Left lung (tissue), 14 donors: ENCODE measurements at regions of chr2 and their contacts with region 1.

Region 1: DNA sequence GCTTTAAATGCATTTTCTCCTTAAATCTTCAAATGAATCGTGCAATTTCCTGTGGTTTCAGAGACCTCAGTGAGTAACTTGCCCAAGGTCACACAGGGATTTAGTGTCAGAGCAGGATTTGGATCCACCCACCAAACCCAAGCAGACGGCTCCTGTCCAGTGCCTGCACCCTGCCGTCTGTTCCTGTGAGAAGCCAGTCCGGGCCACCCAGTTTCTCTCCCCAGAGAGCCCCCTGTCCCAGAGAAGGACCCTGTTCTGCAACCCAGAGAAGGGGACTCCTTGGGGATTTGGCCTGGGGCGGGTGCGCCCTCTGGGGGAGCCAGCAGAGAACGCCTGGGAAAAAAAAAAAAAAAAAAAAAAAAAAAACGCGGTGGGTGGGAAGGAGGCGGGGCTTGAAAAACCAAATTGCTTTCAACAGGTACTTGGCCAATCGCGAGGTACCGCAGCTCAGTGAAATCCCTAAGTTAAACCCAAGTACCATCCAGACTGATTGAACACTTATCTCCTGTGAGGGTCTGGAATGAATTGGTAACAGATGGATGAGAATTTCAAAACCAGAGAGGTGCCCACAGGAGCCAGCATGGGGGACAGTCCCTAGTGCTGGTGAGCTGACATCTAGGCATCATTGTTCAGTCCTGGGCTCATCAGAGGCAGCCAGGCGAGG is 30.9 kb upstream of the REEP1 start:
- DNase-seq: peak in 2 of 4 donors; percentile 42 to 60
- ATAC-seq: peak; percentile 83
- H3K4me3 ChIP-seq: no peak overlapping the region
- H3K27ac ChIP-seq: no peak overlapping the region
- H3K4me1 ChIP-seq: peaks cover 0 to 7% of the 10 kb centered on the region in 2 donors
- H3K27me3 ChIP-seq: no peaks in the 10 kb centered on the region
- CTCF ChIP-seq: peak; percentile 18 to 61

Region 2: DNA sequence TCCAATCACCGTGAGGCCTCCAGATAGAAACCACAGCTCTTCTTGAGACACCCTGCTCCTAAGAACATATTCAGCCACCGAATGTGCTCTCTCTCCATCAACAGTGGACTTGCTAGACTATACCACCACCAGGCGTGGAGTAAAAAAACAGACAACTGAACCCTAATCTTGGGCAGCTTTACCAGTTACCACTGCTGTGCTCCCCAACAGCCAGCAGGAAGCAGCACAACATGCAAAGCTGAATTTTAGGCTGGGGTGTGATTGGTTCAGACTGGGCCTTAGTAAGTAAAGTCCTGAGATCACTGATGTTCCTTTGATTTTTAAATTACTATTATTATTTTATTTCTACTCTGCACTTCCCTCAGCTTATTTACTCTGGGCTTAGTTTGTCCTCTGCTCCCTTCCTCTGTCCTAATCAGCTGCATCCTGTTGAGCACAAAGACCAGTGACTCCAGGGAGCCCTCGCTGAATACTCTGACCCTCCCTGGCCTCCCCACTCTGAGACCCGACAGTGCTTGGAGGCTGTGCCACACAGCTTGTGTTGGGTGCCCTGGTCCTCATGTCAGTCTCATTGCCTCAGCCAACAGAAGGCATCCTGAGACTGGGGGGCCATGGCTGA is 147.1 kb before region 1 on chr2:
- intact Hi-C with region 1: loop called in 1 of 2 experiments (anchors 10 kb)
- DNase-seq: peak in 1 of 4 donors; percentile 55
- ATAC-seq: peak; percentile 67
- H3K4me3 ChIP-seq: no peak overlapping the region
- H3K27ac ChIP-seq: no peak overlapping the region
- H3K4me1 ChIP-seq: peaks cover 9% of the 10 kb centered on the region in 2 donors
- H3K27me3 ChIP-seq: peaks cover 0 to 5% of the 10 kb centered on the region in 2 donors
- CTCF ChIP-seq: peak; percentile 64 to 72

Region 3: DNA sequence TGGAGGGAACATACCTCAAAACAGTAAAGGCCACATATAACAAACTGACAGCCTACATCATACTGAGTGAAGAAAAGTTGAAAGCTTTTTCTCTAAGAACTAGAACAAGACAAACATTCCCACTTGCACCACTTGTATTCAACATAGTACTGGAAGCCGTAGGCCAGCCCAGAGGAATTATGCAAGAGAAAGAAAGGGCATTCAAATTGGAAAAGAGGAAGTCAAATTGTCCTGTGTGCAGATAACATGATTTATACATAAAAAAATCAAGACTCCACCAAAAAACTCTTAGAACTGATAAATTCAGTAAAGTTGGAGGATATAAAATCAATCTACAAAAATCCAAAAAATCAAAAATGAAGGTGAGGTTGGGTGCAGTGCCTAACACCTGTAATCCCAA is 64.8 kb after region 1 on chr2:
- intact Hi-C with region 1: no loop called
- DNase-seq: no peak
- ATAC-seq: no peak
- H3K4me3 ChIP-seq: no peak overlapping the region
- H3K27ac ChIP-seq: no peak overlapping the region
- H3K4me1 ChIP-seq: no peaks in the 10 kb centered on the region
- H3K27me3 ChIP-seq: no peaks in the 10 kb centered on the region
- CTCF ChIP-seq: no peak